BJ (cell line): ENCODE measurements at regions of chr4 and their contacts with region 1.

Region 1: GRCh38 chr4:119041951-119042560 is 93.6 kb upstream of the MYOZ2 start:
- DNase-seq: no peak
- H3K4me3 ChIP-seq: no peak overlapping the region
- H3K27me3 ChIP-seq: no peaks in the 10 kb centered on the region
- CTCF ChIP-seq: peak; percentile 62

Region 2: GRCh38 chr4:118373614-118374255 is 668.3 kb before region 1 on chr4:
- CTCF ChIA-PET with region 1: no interaction called
- POLR2A ChIA-PET with region 1: no interaction called
- DNase-seq: peak; percentile 76
- H3K4me3 ChIP-seq: no peak overlapping the region
- H3K27me3 ChIP-seq: no peaks in the 10 kb centered on the region
- CTCF ChIP-seq: no peak

Region 3: DNA sequence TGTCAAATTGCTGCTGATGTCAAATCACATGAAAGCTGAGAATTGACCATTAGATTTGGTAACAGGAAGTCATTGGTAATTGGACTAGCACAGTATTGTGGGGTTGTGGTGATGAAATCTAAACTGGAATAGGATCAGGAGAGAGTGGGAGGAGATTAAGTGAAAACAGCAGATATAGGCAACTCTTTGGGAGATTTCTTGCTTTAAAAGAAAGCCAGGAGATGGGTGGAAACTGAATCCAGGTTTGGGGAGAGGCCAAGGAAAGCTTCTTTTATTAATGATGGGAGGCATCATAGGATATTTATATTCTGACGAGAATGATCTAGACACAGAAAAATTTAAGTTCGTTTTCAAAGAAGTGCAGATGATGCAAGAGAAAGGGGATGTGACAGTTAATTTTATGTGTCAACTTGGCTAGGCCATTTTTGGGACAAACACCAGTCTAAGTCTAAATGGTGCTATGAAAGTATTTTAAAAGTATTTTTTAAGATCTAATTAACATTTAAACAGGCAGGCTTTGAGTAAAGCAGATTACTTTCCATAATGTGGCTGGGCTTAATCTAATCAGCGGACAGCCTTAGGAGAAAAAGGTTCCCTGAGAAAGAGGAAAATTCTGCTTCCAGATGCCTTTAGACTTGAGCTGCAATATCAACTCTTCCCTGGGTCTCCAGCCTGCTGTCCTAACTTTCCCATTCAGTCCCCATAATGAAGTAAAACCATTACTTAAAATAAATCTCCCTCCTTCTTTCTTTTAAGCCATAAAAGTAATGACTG is 230.9 kb before region 1 on chr4:
- CTCF ChIA-PET with region 1: no interaction called
- POLR2A ChIA-PET with region 1: no interaction called
- DNase-seq: peak; percentile 64
- H3K4me3 ChIP-seq: no peak overlapping the region
- H3K27me3 ChIP-seq: no peaks in the 10 kb centered on the region
- CTCF ChIP-seq: no peak

Region 4: DNA sequence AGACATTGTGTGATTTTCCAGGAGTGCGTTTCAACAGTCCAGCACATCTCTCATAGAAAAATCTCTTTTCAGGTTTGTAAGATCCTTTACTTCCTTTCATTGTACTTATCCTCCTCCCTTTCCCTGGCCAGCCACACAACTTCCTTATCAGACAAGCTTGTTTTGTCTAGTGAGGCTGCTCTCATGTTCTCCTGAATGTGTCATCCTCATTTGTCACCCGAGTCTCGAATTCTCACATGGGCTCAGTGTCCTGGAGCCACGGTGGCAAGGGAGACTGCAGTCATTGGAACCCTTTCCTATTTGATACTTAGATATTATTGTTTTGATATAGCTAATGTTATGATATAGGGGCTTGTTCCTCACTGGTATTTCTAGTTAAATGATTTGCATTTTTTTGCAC is 136.5 kb before region 1 on chr4:
- CTCF ChIA-PET with region 1: no interaction called
- POLR2A ChIA-PET with region 1: no interaction called
- DNase-seq: no peak
- H3K4me3 ChIP-seq: no peak overlapping the region
- H3K27me3 ChIP-seq: no peaks in the 10 kb centered on the region
- CTCF ChIP-seq: no peak

Region 5: DNA sequence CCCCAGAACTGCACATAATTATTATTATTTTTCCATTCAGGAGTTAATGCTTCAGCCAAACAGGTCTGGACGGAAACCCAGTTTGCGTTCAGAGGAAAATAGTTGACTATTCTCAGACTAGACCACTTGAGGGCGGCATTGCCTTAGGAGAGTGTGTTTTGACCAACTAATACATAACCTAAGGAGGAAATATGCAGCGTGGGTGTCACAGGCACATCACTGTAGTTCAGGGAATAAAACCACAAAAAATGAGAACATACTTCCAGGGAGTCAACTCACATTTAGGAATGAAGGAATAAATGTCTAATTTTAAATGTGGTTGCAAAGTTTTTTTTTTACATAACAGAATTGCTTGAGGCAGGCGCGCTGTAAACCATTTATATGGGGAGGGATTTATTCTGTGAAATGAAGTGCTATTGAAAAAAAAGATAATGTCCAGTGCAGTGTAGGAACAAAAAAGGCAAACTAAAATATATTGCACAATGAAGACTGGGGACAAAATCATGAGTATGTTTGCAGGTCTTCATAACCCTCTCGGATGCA is 60.1 kb before region 1 on chr4:
- CTCF ChIA-PET with region 1: interaction called, 37 read pairs
- POLR2A ChIA-PET with region 1: interaction called, 4 read pairs
- DNase-seq: peak; percentile 88
- H3K4me3 ChIP-seq: no peak overlapping the region
- H3K27me3 ChIP-seq: no peaks in the 10 kb centered on the region
- CTCF ChIP-seq: peak; percentile 66

Region 6: GRCh38 chr4:119025916-119026661 is 16.0 kb before region 1 on chr4:
- CTCF ChIA-PET with region 1: interaction called, 4 read pairs
- POLR2A ChIA-PET with region 1: interaction called, 13 read pairs
- DNase-seq: peak; percentile 90
- H3K4me3 ChIP-seq: no peak overlapping the region
- H3K27me3 ChIP-seq: no peaks in the 10 kb centered on the region
- CTCF ChIP-seq: no peak

Region 7: GRCh38 chr4:119103263-119103662 is 61.2 kb after region 1 on chr4:
- CTCF ChIA-PET with region 1: interaction called, 15 read pairs
- POLR2A ChIA-PET with region 1: interaction called, 5 read pairs
- DNase-seq: peak; percentile 99
- H3K4me3 ChIP-seq: no peak overlapping the region
- H3K27me3 ChIP-seq: no peaks in the 10 kb centered on the region
- CTCF ChIP-seq: no peak

Region 8: DNA sequence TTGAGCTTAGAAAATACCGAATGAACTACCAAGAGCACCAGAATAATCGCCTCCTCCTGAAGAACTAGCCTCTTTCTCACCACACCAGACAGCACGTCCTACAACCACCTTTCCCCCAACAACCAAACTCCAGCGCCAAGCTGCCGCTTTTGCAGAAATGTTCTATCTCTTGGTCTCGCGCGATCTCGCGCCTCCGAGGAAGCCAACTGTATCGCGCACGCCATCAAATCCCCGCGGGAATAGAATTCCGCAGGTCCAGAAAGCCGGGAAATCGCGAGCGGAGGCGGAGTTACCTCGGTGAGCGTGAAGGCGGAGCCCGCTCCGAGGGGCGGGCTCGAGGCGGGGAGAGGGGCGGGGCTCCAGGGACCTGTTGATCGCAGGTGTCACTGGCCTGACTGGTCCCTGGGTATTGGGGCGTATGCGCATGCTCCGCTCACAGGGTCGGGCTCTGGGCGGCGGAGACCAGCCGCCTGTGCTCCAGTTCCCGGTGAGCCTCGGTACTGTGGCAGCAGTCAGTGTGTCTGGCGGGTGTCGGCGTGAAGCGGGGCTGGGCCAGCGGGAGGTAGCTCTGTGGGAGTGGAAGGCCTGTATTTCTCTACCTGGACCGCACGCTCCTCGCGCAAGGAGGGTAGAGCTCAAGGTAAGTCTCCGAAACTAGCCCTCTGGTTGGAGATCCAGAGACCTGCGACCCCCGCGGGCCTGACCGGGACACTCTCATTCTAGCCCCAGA is 170.3 kb after region 1 on chr4 and contains the start of gene USP53:
- CTCF ChIA-PET with region 1: interaction called, 6 read pairs
- POLR2A ChIA-PET with region 1: interaction called, 13 read pairs
- DNase-seq: peak; percentile 93
- H3K4me3 ChIP-seq: peak within 1 kb of the TSS; percentile 96
- H3K27me3 ChIP-seq: no peaks in the 10 kb centered on the region
- CTCF ChIP-seq: no peak
- polyA plus RNA-seq, gene USP53: 70.5 and 148 TPM in 2 replicates